Posterior cingulate gyrus (tissue), 11 donors: ENCODE measurements at regions of chr9 and their contacts with region 1.

Region 1: GRCh38 chr9:104927912-104928740 is at the start of gene ABCA1:
- DNase-seq: peak; percentile 77 to 98 (median 86)

Region 2: GRCh38 chr9:104810421-104811339 is 117.4 kb before region 1 on chr9:
- intact Hi-C with region 1: no loop called
- DNase-seq: peak in 2 of 10 donors; percentile 28 to 34

Region 3: DNA sequence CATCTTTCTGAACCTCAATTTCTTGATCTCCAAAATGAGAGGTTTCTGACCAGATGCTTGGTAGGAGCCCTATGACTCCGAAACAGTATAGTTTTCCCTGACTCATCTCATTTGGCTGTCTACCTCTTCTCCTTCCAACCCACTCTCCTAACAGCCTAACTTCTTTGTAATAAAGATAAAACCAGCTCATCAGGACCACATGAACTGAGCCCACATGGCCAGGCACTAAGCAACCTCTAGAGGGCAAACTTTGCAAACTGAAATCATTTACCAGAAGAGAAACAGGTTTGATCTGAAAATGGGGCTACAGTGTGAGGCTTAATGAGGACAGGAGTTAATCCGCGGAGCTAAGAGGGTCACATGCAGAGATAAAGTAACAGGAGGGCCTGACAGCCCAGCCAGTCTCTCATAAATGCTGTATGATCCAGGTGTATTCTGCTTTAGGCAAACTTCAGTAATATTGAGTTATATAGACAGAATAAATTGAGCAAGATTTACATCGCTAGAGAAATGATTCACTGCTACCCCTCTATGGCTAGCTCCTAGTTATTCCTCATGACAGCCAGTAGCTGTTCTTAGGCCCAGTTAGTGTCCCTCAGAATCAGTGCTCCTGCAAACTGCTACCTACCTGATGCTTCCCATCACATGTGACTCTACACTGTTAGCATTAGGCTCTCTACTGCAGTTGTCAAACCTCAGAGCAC is 64.8 kb before region 1 on chr9:
- intact Hi-C with region 1: loop called (anchors 5 kb)
- DNase-seq: peak in 7 of 10 donors; percentile 23 to 92 (median 42)

Region 4: DNA sequence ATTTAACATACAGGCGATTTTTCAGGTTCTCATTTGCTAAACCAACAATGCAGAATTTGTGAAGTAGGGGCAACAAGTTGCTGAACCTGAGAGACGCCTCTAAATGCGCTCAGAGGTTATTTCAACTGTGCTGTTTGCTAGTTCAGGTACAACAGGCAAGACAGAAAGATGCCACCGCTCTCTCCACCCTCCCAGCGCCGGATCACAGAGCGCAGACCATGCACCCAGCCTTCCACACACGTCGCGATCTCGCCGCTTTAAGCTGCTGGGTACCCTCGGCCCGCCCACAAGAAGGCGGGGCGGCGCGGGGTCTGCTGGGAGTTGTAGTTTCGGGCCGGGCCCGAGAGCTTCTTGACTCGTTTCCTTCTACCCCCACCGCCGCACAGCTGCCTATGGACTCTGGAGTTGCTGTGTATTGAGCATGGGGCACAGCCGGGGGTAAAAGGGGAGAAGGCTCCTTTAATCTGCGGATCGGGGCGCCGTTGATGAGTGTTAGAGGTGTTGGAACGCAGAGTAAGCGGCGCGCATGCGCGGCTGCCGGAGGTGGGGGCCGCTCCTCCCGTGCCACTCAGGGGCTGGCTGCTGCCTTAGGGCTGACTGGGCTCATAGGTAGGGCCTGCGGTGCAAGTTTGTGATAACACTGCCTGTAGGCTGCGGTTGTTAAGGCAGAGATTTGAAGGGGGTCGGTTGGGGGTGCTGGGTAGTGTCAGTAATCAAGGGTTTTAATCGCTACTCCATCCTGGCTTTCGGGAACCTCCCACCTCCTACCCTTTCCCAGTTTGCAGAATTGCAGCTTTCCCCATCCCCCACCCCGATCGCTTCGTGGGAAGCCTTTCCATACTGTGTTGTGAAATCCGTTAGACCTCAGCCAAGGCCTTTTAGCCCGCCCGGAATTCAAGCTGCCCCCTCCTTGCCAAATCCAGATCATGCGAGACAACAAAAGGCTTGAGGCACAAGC is 40.2 kb after region 1 on chr9:
- intact Hi-C with region 1: loop called (anchors 1 kb)
- DNase-seq: peak; percentile 82 to 98 (median 91)

Region 5: DNA sequence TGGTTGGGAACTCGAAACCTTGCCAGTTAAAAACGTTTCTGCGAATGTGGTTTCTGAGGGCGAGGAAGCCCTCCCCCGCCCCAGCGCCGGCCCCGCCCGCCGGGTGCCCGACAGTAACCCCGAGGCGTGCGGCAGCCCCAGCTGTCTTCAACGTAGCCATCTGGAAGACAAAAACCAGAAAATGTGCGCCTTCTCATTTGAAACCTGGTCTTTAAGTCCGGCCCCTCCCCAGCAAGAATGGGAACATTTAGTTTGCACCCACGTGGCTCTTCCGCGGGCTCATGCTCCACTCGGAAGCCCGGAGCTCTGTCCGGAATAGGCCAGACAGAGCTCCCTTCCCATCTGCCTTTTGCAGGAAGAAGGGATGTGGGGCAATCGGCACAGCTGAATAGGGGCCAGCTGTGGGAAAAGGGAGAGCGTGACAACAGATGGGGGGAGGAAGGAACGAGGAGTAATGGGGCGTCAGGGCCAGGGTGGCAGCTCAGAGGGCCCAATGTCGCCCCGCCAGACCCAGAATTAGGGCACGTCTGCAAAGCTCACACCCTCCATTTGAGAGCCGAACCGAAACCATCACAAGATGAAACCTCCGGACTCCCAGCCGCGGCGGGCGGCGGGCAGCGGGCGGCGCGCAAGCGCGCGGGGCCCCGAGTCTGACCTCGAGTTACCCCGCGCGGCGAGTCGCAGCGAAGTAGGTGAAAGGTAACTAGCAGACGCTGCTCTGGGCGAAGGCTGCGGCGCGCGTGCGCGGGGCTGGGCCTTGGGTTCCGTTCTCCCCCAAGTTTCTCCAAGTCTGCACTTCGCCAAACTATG is 63.2 kb after region 1 on chr9:
- intact Hi-C with region 1: loop called (anchors 10 kb)
- DNase-seq: peak; percentile 70 to 98 (median 84)

Region 6: GRCh38 chr9:105103782-105104181 is 175.7 kb after region 1 on chr9:
- intact Hi-C with region 1: no loop called
- DNase-seq: no peak

Region 7: GRCh38 chr9:105244003-105244733 is 316.0 kb after region 1 on chr9 and contains the start of gene SLC44A1:
- intact Hi-C with region 1: loop called (anchors 5 kb)
- DNase-seq: peak; percentile 95 to 100 (median 97)

Region 8: GRCh38 chr9:105414947-105415661 is 487.0 kb after region 1 on chr9:
- intact Hi-C with region 1: loop called (anchors 10 kb)
- DNase-seq: peak in 6 of 10 donors; percentile 16 to 84 (median 64)